Activated B cell treated with CpG ODN at 0.5 μM for 24 hours (primary cell): ENCODE measurements at regions of chr21 and their contacts with region 1.

Region 1: GRCh38 chr21:14877570-14878228 is 187.1 kb downstream of the NRIP1 start:
- DNase-seq: no peak
- ATAC-seq: peak; percentile 80
- H3K4me3 Mint-ChIP-seq: no peak overlapping the region
- H3K27ac Mint-ChIP-seq: no peak overlapping the region
- H3K4me1 Mint-ChIP-seq: peaks cover 69% of the 10 kb centered on the region
- H3K27me3 Mint-ChIP-seq: no peaks in the 10 kb centered on the region
- CTCF ChIP-seq: no peak

Region 2: GRCh38 chr21:14825514-14825974 is 52.2 kb before region 1 on chr21:
- CTCF ChIA-PET with region 1: no interaction called
- POLR2A ChIA-PET with region 1: no interaction called
- intact Hi-C with region 1: no loop called
- DNase-seq: no peak
- ATAC-seq: no peak
- H3K4me3 Mint-ChIP-seq: no peak overlapping the region
- H3K27ac Mint-ChIP-seq: no peak overlapping the region
- H3K4me1 Mint-ChIP-seq: peaks cover 3% of the 10 kb centered on the region
- H3K27me3 Mint-ChIP-seq: no peaks in the 10 kb centered on the region
- CTCF ChIP-seq: no peak

Region 3: GRCh38 chr21:15121655-15122120 is 244.0 kb after region 1 on chr21:
- CTCF ChIA-PET with region 1: no interaction called
- POLR2A ChIA-PET with region 1: no interaction called
- intact Hi-C with region 1: loop called (anchors 10 kb)
- DNase-seq: no peak
- ATAC-seq: no peak
- H3K4me3 Mint-ChIP-seq: no peak overlapping the region
- H3K27ac Mint-ChIP-seq: no peak overlapping the region
- H3K4me1 Mint-ChIP-seq: no peaks in the 10 kb centered on the region
- H3K27me3 Mint-ChIP-seq: peaks cover 3% of the 10 kb centered on the region
- CTCF ChIP-seq: no peak

Region 4: GRCh38 chr21:15159382-15160020 is 281.8 kb after region 1 on chr21:
- CTCF ChIA-PET with region 1: no interaction called
- POLR2A ChIA-PET with region 1: no interaction called
- intact Hi-C with region 1: loop called (anchors 5 kb)
- DNase-seq: no peak
- ATAC-seq: peak; percentile 90
- H3K4me3 Mint-ChIP-seq: peak overlapping the region; percentile 33
- H3K27ac Mint-ChIP-seq: peak overlapping the region; percentile 63
- H3K4me1 Mint-ChIP-seq: peaks cover 23% of the 10 kb centered on the region
- H3K27me3 Mint-ChIP-seq: peaks cover 3% of the 10 kb centered on the region
- CTCF ChIP-seq: no peak

Region 5: GRCh38 chr21:15206514-15206913 is 328.8 kb after region 1 on chr21:
- CTCF ChIA-PET with region 1: no interaction called
- POLR2A ChIA-PET with region 1: no interaction called
- intact Hi-C with region 1: loop called (anchors 5 kb)
- DNase-seq: no peak
- ATAC-seq: peak; percentile 76
- H3K4me3 Mint-ChIP-seq: peak overlapping the region; percentile 24
- H3K27ac Mint-ChIP-seq: peak overlapping the region; percentile 3
- H3K4me1 Mint-ChIP-seq: peaks cover 22% of the 10 kb centered on the region
- H3K27me3 Mint-ChIP-seq: peaks cover 37% of the 10 kb centered on the region
- CTCF ChIP-seq: no peak

Region 6: DNA sequence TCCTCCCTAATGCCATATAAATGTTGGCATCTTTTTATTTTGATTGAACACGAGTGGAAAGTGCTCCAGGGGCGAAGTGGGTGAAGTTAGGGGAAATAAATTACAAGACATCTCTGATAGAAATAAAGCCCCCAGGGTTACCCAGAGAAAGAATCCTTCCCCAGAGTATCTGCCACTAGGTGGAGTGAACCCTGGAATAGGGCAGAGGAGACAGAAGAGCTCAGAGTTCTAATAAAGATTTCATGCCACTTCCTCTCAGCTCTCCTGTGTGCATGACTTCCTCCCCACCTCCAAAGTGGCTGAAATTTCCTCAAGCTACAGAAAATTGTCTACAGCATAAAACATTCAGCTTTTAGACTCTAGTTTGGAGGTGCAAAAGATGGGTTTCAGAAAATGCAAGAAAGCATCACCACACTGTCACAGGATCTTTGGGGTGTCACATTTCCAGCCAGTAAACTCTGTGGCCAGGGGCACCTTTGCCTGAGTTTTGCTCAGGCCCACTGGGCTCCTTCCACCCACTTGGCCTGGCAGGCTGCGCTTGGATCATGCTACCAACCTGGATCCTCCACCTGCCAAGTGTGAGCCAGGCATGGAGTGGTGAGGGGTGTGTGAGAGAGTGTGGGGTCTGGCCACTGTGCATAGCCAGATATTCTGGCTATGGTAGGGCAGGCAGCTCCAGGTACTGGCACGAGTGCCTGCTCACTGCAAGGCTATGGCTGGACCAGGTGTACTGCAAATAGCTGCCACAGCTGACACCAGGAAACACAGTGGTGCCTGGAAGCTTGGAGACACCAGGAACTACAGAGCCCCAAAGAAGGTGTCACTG is 643.3 kb after region 1 on chr21:
- CTCF ChIA-PET with region 1: no interaction called
- POLR2A ChIA-PET with region 1: no interaction called
- intact Hi-C with region 1: no loop called
- DNase-seq: no peak
- ATAC-seq: no peak
- H3K4me3 Mint-ChIP-seq: no peak overlapping the region
- H3K27ac Mint-ChIP-seq: no peak overlapping the region
- H3K4me1 Mint-ChIP-seq: peaks cover 9% of the 10 kb centered on the region
- H3K27me3 Mint-ChIP-seq: peaks cover 4% of the 10 kb centered on the region
- CTCF ChIP-seq: no peak